ENCODE measurements at regions of chr4 and their contacts with region 1.

Region 1: GRCh38 chr4:142416711-142417275 is 429.3 kb downstream of the INPP4B start:
- DNase-seq: peak in 3 of 35 experiments; percentile 7 to 59 (median 10)
- ATAC-seq: peak; percentile 92 to 96 (median 94)
- H3K4me3 ChIP-seq: peak overlapping the region in 1 of 2 donors; percentile 31
- H3K4me3 Mint-ChIP-seq: peak overlapping the region; percentile 59 to 81 (median 74)
- H3K27ac ChIP-seq: peak overlapping the region; percentile 93
- H3K27ac Mint-ChIP-seq: peak overlapping the region; percentile 97 to 99
- H3K4me1 ChIP-seq: peaks cover 9 to 16% of the 10 kb centered on the region in 2 experiments
- H3K4me1 Mint-ChIP-seq: peaks cover 45 to 52% (median 49%) of the 10 kb centered on the region in 3 donors
- H3K27me3 ChIP-seq: no peaks in the 10 kb centered on the region
- H3K27me3 Mint-ChIP-seq: no peaks in the 10 kb centered on the region

Region 2: DNA sequence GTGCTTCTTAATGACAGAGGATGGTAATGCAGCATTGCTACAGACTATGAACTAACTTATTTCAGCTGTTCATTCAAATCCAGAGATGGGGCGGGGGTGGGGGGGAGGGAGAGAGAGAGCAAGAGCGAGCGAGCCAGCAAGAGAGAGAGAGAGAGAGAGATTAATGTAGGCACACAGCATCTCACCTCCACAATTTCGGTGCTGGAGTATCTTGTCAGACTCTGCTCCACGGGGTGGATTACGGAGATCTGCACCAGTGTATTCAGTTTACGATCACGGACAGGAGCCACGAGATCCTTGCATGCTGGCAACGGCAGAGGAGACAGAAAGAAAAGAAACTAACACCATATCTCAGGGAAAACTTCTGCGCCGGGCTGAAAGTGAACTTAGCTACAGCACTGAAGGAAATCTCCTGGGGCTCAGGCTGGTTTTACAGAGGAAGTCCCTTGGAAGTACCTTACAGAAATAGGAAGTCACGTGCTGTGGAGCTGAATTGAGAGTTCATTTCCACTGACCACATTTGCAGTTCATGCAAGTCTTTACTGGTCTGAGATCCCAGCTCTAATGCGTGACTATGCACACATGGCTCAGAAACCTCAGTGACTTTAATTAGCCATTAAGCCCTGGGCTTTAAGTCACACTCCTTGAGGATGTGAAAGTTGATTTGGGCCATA is 11.6 kb before region 1 on chr4:
- CTCF ChIA-PET with region 1: interaction called in 1 of 2 experiments, 18 read pairs
- POLR2A ChIA-PET with region 1: interaction called, 12 to 16 read pairs
- DNase-seq: peak; percentile 5 to 75 (median 34)
- ATAC-seq: peak; percentile 39 to 66 (median 57)
- H3K4me3 ChIP-seq: peak overlapping the region; percentile 56 to 81
- H3K4me3 Mint-ChIP-seq: peak overlapping the region; percentile 84 to 94 (median 94)
- H3K27ac ChIP-seq: peak overlapping the region; percentile 83
- H3K27ac Mint-ChIP-seq: peak overlapping the region; percentile 98 to 99
- H3K4me1 ChIP-seq: peaks cover 34 to 41% of the 10 kb centered on the region in 2 experiments
- H3K4me1 Mint-ChIP-seq: peaks cover 64 to 74% (median 68%) of the 10 kb centered on the region in 3 donors
- H3K27me3 ChIP-seq: no peaks in the 10 kb centered on the region
- H3K27me3 Mint-ChIP-seq: no peaks in the 10 kb centered on the region

Region 3: GRCh38 chr4:142660728-142661127 is 243.9 kb after region 1 on chr4:
- CTCF ChIA-PET with region 1: no interaction called
- POLR2A ChIA-PET with region 1: no interaction called
- DNase-seq: no peak
- ATAC-seq: no peak
- H3K4me3 ChIP-seq: no peak overlapping the region
- H3K4me3 Mint-ChIP-seq: no peak overlapping the region
- H3K27ac ChIP-seq: no peak overlapping the region
- H3K27ac Mint-ChIP-seq: no peak overlapping the region
- H3K4me1 ChIP-seq: no peaks in the 10 kb centered on the region
- H3K4me1 Mint-ChIP-seq: no peaks in the 10 kb centered on the region
- H3K27me3 ChIP-seq: no peaks in the 10 kb centered on the region
- H3K27me3 Mint-ChIP-seq: no peaks in the 10 kb centered on the region

Measured in T-cell (primary cell).